Activated CD4-positive, alpha-beta memory T cell treated with anti-CD3 and anti-CD28 coated beads for 36 hours (primary cell): ENCODE measurements at regions of chr20 and their contacts with region 1.

Region 1: GRCh38 chr20:52972190-52972937 is at the start of gene TSHZ2:
- DNase-seq: peak; percentile 74
- H3K4me3 Mint-ChIP-seq: peak within 1 kb of the TSS; percentile 87
- H3K27ac Mint-ChIP-seq: peak within 1 kb of the TSS; percentile 95
- H3K4me1 Mint-ChIP-seq: peaks cover 30% of the 10 kb centered on the region
- H3K27me3 Mint-ChIP-seq: peaks cover 12% of the 10 kb centered on the region
- total RNA-seq, gene TSHZ2: 28.9 to 36.0 TPM

Region 2: GRCh38 chr20:52305858-52306257 is 666.5 kb before region 1 on chr20:
- CTCF ChIA-PET with region 1: no interaction called
- POLR2A ChIA-PET with region 1: no interaction called
- intact Hi-C with region 1: loop called (anchors 2 kb)
- DNase-seq: peak; percentile 60
- H3K4me3 Mint-ChIP-seq: peak overlapping the region; percentile 13
- H3K27ac Mint-ChIP-seq: peak overlapping the region; percentile 50
- H3K4me1 Mint-ChIP-seq: peaks cover 51% of the 10 kb centered on the region
- H3K27me3 Mint-ChIP-seq: no peaks in the 10 kb centered on the region

Region 3: GRCh38 chr20:53001498-53002301 is 29.3 kb after region 1 on chr20:
- CTCF ChIA-PET with region 1: interaction called, 12 read pairs
- POLR2A ChIA-PET with region 1: interaction called, 45 read pairs
- intact Hi-C with region 1: loop called (anchors 1 kb)
- DNase-seq: peak; percentile 48
- H3K4me3 Mint-ChIP-seq: peak overlapping the region; percentile 70
- H3K27ac Mint-ChIP-seq: peak overlapping the region; percentile 96
- H3K4me1 Mint-ChIP-seq: peaks cover 72% of the 10 kb centered on the region
- H3K27me3 Mint-ChIP-seq: no peaks in the 10 kb centered on the region

Region 4: DNA sequence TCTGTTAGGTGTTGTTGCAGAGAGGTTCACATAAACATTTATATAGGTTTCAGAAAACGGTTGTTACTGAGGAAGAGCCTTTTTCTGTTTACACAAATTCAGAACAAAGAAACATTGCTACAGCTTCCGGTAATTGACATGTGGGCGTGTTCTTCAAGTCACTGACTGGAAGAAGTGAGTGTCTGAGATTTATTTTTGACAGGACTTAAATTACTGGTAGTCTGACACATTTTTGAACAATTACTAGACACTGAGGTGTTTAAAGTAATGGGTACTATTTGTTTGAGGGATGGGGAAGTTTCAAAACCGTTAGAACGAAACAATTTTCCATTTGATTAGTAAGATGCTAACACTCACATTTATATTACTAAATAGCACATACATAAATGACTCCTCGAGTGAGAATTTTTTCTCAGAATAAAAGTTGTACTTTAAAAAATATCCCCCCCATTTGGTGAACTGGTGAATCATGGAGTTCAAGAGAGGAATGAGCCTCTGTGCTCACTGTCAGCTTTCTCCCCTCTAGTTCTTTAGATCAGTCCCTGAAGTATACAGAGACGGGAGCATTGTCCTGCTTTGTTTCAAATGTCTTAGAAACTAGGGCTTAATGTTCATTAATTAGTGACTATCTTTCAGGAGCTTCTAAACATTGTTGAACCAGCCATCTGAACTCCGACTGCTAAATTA is 98.5 kb after region 1 on chr20:
- CTCF ChIA-PET with region 1: interaction called, 5 read pairs
- POLR2A ChIA-PET with region 1: interaction called, 66 read pairs
- intact Hi-C with region 1: loop called (anchors 1 kb)
- DNase-seq: peak; percentile 47
- H3K4me3 Mint-ChIP-seq: peak overlapping the region; percentile 18
- H3K27ac Mint-ChIP-seq: peak overlapping the region; percentile 93
- H3K4me1 Mint-ChIP-seq: peaks cover 56% of the 10 kb centered on the region
- H3K27me3 Mint-ChIP-seq: no peaks in the 10 kb centered on the region

Region 5: DNA sequence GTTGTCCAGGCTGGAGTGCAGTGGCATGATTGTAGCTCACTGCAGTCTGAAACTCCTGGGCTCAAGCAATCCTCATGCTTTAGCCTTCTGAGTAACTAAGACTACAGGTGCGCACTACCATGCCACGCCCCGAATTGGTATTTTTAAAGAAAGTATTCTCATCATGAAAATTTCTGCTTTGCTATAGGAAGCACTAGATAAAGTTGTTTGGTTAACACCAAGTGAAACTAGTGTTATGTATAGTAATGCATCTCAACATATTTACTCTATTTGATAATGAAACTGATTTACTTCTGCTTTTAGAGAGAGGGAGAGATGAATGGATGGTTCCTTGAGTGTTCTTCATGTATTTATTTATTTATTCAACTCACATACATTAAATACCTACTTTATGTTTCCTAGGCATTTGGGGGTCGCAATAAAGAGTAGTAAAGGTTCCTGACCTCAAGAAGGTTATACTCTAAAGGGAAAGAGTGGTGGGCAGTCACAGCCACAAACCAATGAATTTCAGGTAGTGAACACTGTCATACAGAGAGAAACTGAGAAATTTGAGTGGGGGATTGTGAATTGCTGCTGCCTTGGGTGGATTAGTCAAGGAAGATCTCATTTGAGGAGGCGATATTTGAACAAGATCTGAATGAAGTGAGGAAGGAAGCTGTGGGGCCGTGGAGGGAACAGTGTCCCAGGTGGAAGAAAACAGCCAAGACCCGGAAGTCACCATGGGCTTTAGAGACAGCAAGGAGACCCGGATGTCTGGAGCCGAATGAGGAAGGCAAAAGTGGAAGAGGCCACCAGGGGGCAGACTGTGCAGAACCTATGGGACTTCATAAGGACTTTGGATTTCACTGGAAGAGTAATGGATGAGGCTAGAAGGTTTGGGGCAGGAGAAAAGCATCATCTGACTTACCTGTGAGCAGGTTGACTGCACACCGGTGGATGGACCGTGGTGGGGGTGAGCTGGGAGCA is 185.4 kb after region 1 on chr20:
- CTCF ChIA-PET with region 1: no interaction called
- POLR2A ChIA-PET with region 1: no interaction called
- intact Hi-C with region 1: loop called (anchors 2 kb)
- DNase-seq: peak; percentile 49
- H3K4me3 Mint-ChIP-seq: no peak overlapping the region
- H3K27ac Mint-ChIP-seq: peak overlapping the region; percentile 3
- H3K4me1 Mint-ChIP-seq: peaks cover 51% of the 10 kb centered on the region
- H3K27me3 Mint-ChIP-seq: no peaks in the 10 kb centered on the region

Region 6: GRCh38 chr20:53238121-53238660 is 265.8 kb after region 1 on chr20:
- CTCF ChIA-PET with region 1: no interaction called
- POLR2A ChIA-PET with region 1: no interaction called
- intact Hi-C with region 1: no loop called
- DNase-seq: no peak
- H3K4me3 Mint-ChIP-seq: no peak overlapping the region
- H3K27ac Mint-ChIP-seq: no peak overlapping the region
- H3K4me1 Mint-ChIP-seq: peaks cover 5% of the 10 kb centered on the region
- H3K27me3 Mint-ChIP-seq: no peaks in the 10 kb centered on the region